ENCODE measurements at regions of chr17 and their contacts with region 1.

Region 1: GRCh38 chr17:56939901-56940343 is 20.9 kb downstream of the COIL start:
- DNase-seq: no peak
- H3K4me3 ChIP-seq: no peak overlapping the region
- H3K27ac ChIP-seq: no peak overlapping the region
- H3K4me1 ChIP-seq: no peaks in the 10 kb centered on the region
- H3K27me3 ChIP-seq: no peaks in the 10 kb centered on the region
- CTCF ChIP-seq: peak in 2 of 3 donors; percentile 38 to 43
- EP300 ChIP-seq: no peak
- POLR2A ChIP-seq: no peak

Region 2: DNA sequence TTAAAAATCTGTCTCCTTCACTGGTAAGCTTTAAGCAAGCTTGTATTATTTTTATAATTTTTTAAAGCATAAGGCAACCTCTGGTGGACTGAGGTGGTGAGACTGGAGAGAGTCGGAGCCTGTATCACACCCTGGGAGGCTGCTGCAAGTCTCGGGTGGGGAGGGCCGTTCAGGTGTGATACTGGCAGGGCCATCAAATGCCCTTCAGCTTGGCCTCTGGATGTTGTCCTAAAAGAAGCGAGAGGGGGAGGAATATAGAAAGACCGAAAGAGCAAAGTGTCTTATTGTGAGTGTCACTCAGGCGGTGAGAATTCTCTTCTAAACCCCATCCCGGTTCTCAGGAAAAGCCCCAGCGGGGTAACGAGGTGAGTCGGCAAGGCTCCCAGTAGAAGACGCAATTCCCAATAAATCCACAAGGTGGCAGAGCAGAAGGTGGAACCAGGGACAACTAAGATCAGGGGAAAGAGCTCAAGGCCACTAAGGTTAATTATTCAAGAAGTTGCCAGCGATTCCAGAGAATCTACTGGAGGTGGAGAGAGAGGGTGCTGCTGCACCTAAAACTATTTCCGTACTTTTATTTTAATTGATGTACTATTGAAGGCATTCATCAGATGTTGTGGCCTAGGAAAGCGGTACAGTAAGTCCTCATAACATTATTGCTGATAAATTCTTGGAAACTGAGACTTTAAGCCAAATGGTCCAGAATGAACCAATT is 120.3 kb before region 1 on chr17:
- intact Hi-C with region 1: loop called (anchors 5 to 10 kb)
- DNase-seq: peak; percentile 41 to 67 (median 50)
- H3K4me3 ChIP-seq: no peak overlapping the region
- H3K27ac ChIP-seq: no peak overlapping the region
- H3K4me1 ChIP-seq: no peaks in the 10 kb centered on the region
- H3K27me3 ChIP-seq: no peaks in the 10 kb centered on the region
- CTCF ChIP-seq: peak; percentile 57 to 67 (median 63)
- EP300 ChIP-seq: no peak
- POLR2A ChIP-seq: no peak

Region 3: DNA sequence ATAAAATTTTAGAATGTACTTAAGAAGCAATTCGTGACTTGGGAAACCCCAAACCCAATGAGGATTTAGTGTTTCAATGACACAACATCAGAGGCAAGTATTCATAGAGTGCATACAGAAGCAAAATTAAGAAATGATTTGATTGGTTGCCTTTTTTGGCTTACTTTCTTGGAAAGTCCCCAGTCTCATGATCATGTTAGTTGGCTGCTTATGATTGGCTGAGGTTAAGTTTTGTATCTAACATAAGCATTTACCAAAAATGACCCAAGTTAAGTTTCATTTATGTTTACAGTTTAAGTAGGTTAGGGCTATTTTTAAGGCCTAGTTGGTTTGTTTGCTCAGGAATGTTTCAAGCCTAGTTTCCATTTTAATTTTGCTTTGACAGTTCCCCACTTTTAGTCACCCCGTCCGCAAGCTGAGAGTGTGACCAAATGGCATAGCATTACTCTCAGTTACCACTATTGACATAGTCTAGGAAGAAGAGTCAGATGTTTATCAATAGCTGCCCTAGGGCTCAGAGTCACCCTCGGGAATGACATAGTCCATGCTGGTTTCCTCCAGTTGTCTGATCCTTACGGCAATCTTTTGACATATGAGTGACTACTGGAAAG is 69.7 kb before region 1 on chr17:
- intact Hi-C with region 1: loop called in 1 of 4 experiments (anchors 10 kb)
- DNase-seq: no peak
- H3K4me3 ChIP-seq: no peak overlapping the region
- H3K27ac ChIP-seq: no peak overlapping the region
- H3K4me1 ChIP-seq: no peaks in the 10 kb centered on the region
- H3K27me3 ChIP-seq: no peaks in the 10 kb centered on the region
- CTCF ChIP-seq: no peak
- EP300 ChIP-seq: no peak
- POLR2A ChIP-seq: no peak

Region 4: GRCh38 chr17:56887550-56888467 is 52.1 kb before region 1 on chr17:
- intact Hi-C with region 1: no loop called
- DNase-seq: no peak
- H3K4me3 ChIP-seq: no peak overlapping the region
- H3K27ac ChIP-seq: no peak overlapping the region
- H3K4me1 ChIP-seq: peaks cover 2% of the 10 kb centered on the region
- H3K27me3 ChIP-seq: no peaks in the 10 kb centered on the region
- CTCF ChIP-seq: no peak
- EP300 ChIP-seq: no peak
- POLR2A ChIP-seq: no peak

Measured in ovary (tissue), 10 donors.